ENCODE measurements at regions of chr19 and their contacts with region 1.

Region 1: DNA sequence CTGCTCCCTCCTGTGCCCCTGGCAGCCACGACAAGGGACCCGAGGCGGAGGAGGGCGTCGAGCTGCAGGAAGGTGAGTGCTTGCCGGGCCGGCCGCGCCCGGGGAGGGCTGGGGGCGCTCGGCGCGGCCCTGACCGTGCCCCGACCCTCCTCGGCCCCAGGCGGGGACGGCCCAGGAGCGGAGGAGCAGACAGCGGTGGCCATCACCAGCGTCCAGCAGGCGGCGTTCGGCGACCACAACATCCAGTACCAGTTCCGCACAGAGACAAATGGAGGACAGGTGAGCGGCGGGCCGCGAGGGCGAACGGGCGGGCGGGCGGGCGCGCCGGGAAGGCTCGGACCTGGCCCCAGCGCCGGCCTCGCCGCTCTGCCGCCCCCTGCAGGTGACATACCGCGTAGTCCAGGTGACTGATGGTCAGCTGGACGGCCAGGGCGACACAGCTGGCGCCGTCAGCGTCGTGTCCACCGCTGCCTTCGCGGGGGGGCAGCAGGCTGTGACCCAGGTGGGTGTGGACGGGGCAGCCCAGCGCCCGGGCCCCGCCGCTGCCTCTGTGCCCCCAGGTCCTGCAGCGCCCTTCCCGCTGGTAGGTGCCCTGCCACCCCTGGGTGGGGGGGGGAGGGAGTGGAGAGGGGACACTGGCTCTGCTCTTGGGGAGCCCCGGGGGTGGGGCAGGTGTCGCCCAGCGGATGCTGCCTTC is 807 bp downstream of the USF2 start:
- DNase-seq: peak; percentile 90 to 95 (median 92)
- H3K4me3 ChIP-seq: peak overlapping the region; percentile 73
- H3K27ac ChIP-seq: peak overlapping the region; percentile 42 to 84
- H3K4me1 ChIP-seq: peaks cover 11% of the 10 kb centered on the region
- H3K27me3 ChIP-seq: no peaks in the 10 kb centered on the region
- CTCF ChIP-seq: peak; percentile 44 to 83 (median 79)
- EP300 ChIP-seq: no peak
- POLR2A ChIP-seq: no peak

Region 2: GRCh38 chr19:34888091-34888490 is 381.5 kb before region 1 on chr19:
- intact Hi-C with region 1: no loop called
- DNase-seq: no peak
- H3K4me3 ChIP-seq: no peak overlapping the region
- H3K27ac ChIP-seq: no peak overlapping the region
- H3K4me1 ChIP-seq: no peaks in the 10 kb centered on the region
- H3K27me3 ChIP-seq: no peaks in the 10 kb centered on the region
- CTCF ChIP-seq: no peak
- EP300 ChIP-seq: no peak
- POLR2A ChIP-seq: no peak

Region 3: DNA sequence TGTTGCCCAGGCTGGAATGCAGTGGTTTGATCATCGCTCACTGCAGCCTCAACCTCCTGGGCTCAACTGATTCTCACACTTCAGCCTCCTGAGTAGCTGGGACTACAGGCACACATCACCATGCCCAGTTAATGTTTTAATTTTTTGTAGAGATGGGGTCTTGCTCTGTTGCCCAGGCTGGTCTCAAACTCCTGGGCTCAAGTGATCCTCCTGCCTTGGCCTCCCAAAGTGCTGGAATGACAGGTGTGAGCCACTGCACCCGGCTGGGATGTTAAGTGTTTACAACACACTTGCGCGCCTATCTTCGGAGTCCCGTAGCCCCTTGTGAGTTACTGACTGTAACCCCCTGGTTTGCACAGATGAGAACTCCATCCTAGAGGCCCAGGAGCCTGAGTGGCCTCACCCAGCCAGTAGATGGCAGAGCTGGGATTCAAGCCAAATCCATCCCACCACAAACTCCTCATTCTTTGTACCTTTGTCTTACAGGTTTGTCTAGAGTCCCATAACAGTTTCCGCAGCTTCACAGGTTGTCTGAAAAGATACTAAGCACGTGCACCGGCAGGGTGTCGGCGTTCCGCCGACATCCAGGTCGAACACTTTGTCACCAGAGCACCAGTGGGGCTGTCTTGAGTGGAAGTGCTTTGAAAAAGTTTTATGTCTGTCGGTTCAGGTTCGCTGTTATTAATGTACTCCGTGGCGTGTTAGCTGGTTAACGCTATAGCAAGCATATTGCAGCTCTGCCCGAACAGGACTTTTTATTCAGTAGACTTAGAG is 37.1 kb after region 1 on chr19:
- intact Hi-C with region 1: loop called in 3 of 4 experiments (anchors 2 to 5 kb)
- DNase-seq: no peak
- H3K4me3 ChIP-seq: no peak overlapping the region
- H3K27ac ChIP-seq: peak overlapping the region in 1 of 2 donors; percentile 91
- H3K4me1 ChIP-seq: peaks cover 29% of the 10 kb centered on the region
- H3K27me3 ChIP-seq: no peaks in the 10 kb centered on the region
- CTCF ChIP-seq: no peak
- EP300 ChIP-seq: no peak
- POLR2A ChIP-seq: no peak

Region 4: GRCh38 chr19:35352448-35353304 is 83.1 kb after region 1 on chr19:
- intact Hi-C with region 1: loop called in 3 of 4 experiments (anchors 5 to 10 kb)
- DNase-seq: peak; percentile 66 to 78 (median 75)
- H3K4me3 ChIP-seq: no peak overlapping the region
- H3K27ac ChIP-seq: no peak overlapping the region
- H3K4me1 ChIP-seq: peaks cover 3% of the 10 kb centered on the region
- H3K27me3 ChIP-seq: no peaks in the 10 kb centered on the region
- CTCF ChIP-seq: peak; percentile 52 to 78 (median 75)
- EP300 ChIP-seq: no peak
- POLR2A ChIP-seq: no peak

Region 5: GRCh38 chr19:35509861-35510625 is 240.5 kb after region 1 on chr19:
- intact Hi-C with region 1: loop called in 1 of 4 experiments (anchors 10 kb)
- DNase-seq: peak; percentile 83 to 91 (median 88)
- H3K4me3 ChIP-seq: peak overlapping the region; percentile 37
- H3K27ac ChIP-seq: peak overlapping the region; percentile 3 to 74
- H3K4me1 ChIP-seq: peaks cover 3% of the 10 kb centered on the region
- H3K27me3 ChIP-seq: no peaks in the 10 kb centered on the region
- CTCF ChIP-seq: peak; percentile 89 to 95 (median 90)
- EP300 ChIP-seq: no peak
- POLR2A ChIP-seq: peak; percentile 51